Sigmoid colon (tissue), 7 donors: ENCODE measurements at regions of chr10 and their contacts with region 1.

Region 1: DNA sequence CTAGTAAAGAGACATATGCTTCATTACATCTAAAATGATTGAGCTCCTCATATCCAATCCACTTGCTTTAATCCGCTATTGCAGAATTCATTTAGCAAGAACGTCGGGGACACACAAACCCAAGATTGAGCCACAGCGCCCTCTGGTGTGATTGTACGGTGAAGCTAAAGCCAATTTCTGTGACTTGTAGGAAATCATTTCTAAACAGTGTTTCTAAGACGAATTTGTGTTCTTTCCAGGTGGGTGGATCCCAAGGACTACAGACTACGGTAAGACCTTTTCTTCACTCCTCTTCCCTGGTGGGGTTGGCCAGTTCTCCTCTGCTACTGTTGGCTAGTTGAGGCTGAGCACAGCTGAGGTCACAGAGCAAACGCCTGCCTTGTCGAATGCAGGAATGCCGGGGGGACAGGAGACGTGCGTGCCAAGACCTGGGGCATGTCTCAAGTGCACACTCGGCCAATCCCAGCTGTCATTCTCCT is 5.2 kb downstream of the DMBT1 start:
- DNase-seq: peak; percentile 88
- H3K4me3 ChIP-seq: peak overlapping the region in 3 of 4 donors; percentile 19 to 29 (median 28)
- H3K27ac ChIP-seq: no peak overlapping the region
- H3K4me1 ChIP-seq: peaks cover 0 to 4% (median 0%) of the 10 kb centered on the region in 4 donors
- H3K27me3 ChIP-seq: peaks cover 0 to 10% (median 0%) of the 10 kb centered on the region in 3 donors
- CTCF ChIP-seq: peak; percentile 47 to 83 (median 78)
- EP300 ChIP-seq: no peak
- POLR2A ChIP-seq: no peak

Region 2: GRCh38 chr10:122279725-122280141 is 286.0 kb before region 1 on chr10:
- intact Hi-C with region 1: loop called (anchors 5 kb)
- DNase-seq: peak; percentile 58
- H3K4me3 ChIP-seq: no peak overlapping the region
- H3K27ac ChIP-seq: no peak overlapping the region
- H3K4me1 ChIP-seq: peaks cover 0 to 8% (median 2%) of the 10 kb centered on the region in 4 donors
- H3K27me3 ChIP-seq: no peaks in the 10 kb centered on the region
- CTCF ChIP-seq: peak in 3 of 4 experiments; percentile 23 to 51 (median 44)
- EP300 ChIP-seq: no peak
- POLR2A ChIP-seq: no peak

Region 3: GRCh38 chr10:122342293-122343134 is 223.3 kb before region 1 on chr10:
- intact Hi-C with region 1: loop called (anchors 1 kb)
- DNase-seq: no peak
- H3K4me3 ChIP-seq: no peak overlapping the region
- H3K27ac ChIP-seq: peak overlapping the region; percentile 51 to 87 (median 75)
- H3K4me1 ChIP-seq: peaks cover 0 to 55% (median 37%) of the 10 kb centered on the region in 4 donors
- H3K27me3 ChIP-seq: no peaks in the 10 kb centered on the region
- CTCF ChIP-seq: peak; percentile 51 to 78 (median 72)
- EP300 ChIP-seq: no peak
- POLR2A ChIP-seq: no peak

Region 4: GRCh38 chr10:122461367-122461728 is 104.4 kb before region 1 on chr10 and contains the start of gene HTRA1:
- intact Hi-C with region 1: loop called (anchors 5 kb)
- DNase-seq: peak; percentile 92
- H3K4me3 ChIP-seq: peak within 1 kb of the TSS; percentile 65 to 83 (median 71)
- H3K27ac ChIP-seq: peak within 1 kb of the TSS; percentile 84 to 93 (median 88)
- H3K4me1 ChIP-seq: peaks cover 3 to 33% (median 24%) of the 10 kb centered on the region in 4 donors
- H3K27me3 ChIP-seq: no peaks in the 10 kb centered on the region
- CTCF ChIP-seq: no peak
- EP300 ChIP-seq: no peak
- POLR2A ChIP-seq: no peak
- total RNA-seq, gene HTRA1: 119 to 162 (median 127) TPM

Region 5: GRCh38 chr10:122703439-122704118 is 137.8 kb after region 1 on chr10:
- intact Hi-C with region 1: loop called (anchors 10 kb)
- DNase-seq: peak; percentile 72
- H3K4me3 ChIP-seq: no peak overlapping the region
- H3K27ac ChIP-seq: no peak overlapping the region
- H3K4me1 ChIP-seq: no peaks in the 10 kb centered on the region
- H3K27me3 ChIP-seq: no peaks in the 10 kb centered on the region
- CTCF ChIP-seq: peak; percentile 22 to 80 (median 75)
- EP300 ChIP-seq: no peak
- POLR2A ChIP-seq: no peak